Activated CD8-positive, alpha-beta T cell treated with anti-CD3 and anti-CD28 coated beads for 36 hours (primary cell): ENCODE measurements at regions of chr11 and their contacts with region 1.

Region 1: GRCh38 chr11:134086376-134086775 is 17.5 kb downstream of the JAM3 start:
- DNase-seq: no peak
- ATAC-seq: no peak
- H3K4me3 Mint-ChIP-seq: no peak overlapping the region
- H3K27ac Mint-ChIP-seq: no peak overlapping the region
- H3K4me1 Mint-ChIP-seq: no peaks in the 10 kb centered on the region
- H3K27me3 Mint-ChIP-seq: no peaks in the 10 kb centered on the region
- CTCF ChIP-seq: no peak

Region 2: DNA sequence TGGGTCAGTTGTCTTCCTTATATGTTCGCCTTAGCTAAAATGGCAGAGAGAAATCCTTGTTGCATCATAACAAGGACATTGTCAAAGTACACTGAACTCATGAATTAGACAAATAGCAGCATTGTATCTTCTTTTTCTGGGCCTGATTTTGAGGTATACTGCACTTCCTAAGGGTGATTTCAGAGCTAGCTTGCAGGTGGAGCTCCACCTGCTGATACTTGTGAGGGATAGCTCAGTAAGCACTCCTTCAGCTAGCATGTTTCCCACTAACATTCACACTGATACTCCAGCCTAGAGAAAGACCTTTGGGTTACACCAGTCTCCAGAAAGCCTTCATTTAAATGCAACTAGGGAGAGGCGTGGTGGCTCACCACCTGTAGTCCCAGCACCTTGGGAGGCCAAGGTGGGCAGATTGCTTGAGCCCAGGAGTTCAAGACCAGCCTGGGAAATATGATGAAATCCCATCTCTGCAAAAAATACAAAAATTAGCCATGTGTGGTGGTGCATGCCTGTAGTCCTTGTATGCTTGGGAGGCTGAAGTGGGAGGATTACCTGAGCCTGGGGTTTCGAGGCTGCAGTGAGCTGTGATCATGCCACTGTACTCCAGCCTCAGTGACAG is 12.3 kb after region 1 on chr11:
- CTCF ChIA-PET with region 1: interaction called, 14 read pairs
- POLR2A ChIA-PET with region 1: no interaction called
- intact Hi-C with region 1: no loop called
- DNase-seq: no peak
- ATAC-seq: peak; percentile 67
- H3K4me3 Mint-ChIP-seq: no peak overlapping the region
- H3K27ac Mint-ChIP-seq: no peak overlapping the region
- H3K4me1 Mint-ChIP-seq: peaks cover 2% of the 10 kb centered on the region
- H3K27me3 Mint-ChIP-seq: no peaks in the 10 kb centered on the region
- CTCF ChIP-seq: peak; percentile 19

Region 3: DNA sequence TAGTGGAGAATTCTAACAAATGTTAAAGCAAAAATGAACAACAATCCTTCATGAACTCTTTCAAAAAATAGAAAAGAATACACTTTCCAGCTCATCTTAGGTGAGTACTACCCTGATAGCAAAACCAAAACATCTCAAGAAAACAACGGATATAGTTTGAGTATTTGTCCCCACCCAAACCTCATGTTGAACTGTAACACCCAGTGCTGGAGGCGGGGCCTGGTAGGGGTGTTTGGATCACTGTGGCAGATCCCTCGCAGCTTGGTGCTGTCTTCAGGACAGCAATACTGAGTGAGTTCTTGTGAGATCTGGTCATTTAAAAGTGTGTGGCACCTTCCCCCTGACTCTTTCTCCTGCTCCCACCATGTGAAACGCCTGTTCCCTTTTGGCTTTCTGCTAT is 110.4 kb after region 1 on chr11:
- CTCF ChIA-PET with region 1: no interaction called
- POLR2A ChIA-PET with region 1: no interaction called
- intact Hi-C with region 1: no loop called
- DNase-seq: no peak
- ATAC-seq: no peak
- H3K4me3 Mint-ChIP-seq: no peak overlapping the region
- H3K27ac Mint-ChIP-seq: peak overlapping the region; percentile 34
- H3K4me1 Mint-ChIP-seq: peaks cover 2% of the 10 kb centered on the region
- H3K27me3 Mint-ChIP-seq: no peaks in the 10 kb centered on the region
- CTCF ChIP-seq: no peak